ENCODE measurements at regions of chr19 and their contacts with region 1.

Region 1: DNA sequence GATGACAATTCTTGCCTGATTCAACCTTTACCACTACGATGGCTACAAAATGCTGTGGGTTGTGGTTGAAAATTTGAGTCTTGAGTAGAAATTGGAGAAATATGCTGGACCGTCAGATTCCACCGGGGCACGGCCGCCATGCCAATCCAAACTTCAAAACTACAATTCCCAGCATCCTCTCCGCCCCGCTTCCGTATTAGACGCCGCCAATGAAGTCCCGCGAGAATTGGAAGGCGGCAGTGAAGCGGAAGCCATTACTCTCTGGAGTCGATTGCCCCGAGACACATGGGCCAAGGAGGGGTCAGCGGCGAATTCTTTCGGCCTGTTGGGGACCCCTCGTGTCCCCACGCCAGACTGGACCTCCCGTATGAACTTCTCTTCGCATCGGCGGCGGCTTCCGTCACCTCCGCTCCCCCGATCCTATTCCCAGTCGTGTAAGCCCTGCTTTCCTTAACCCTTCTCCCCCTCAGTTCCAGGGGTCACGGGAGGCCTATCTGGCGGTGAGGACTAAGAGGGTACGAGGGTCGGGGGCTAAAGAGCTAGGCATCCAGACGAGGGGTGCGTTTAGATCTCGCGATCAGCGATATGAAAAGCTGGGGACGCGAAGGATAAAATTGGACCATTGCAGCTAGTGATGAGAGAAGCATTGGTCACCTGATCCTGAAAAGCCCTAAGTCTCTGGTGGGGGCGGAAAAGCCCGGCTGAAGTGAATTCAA is at the start of gene ZNF317:
- DNase-seq: peak; percentile 85
- H3K4me3 ChIP-seq: peak within 1 kb of the TSS; percentile 80 to 83 (median 80)
- H3K27ac ChIP-seq: peak within 1 kb of the TSS; percentile 83
- H3K4me1 ChIP-seq: peaks cover 6% of the 10 kb centered on the region
- H3K27me3 ChIP-seq: no peaks in the 10 kb centered on the region
- CTCF ChIP-seq: no peak
- total RNA-seq, gene ZNF317: 26.3 to 36.3 TPM

Region 2: GRCh38 chr19:9107375-9107774 is 32.9 kb before region 1 on chr19 and contains the start of gene OR7G2:
- CTCF ChIA-PET with region 1: no interaction called
- dilution Hi-C with region 1: no loop called
- in situ Hi-C with region 1: no loop called
- intact Hi-C with region 1: no loop called
- DNase-seq: no peak
- H3K4me3 ChIP-seq: no peak within 1 kb of the TSS
- H3K27ac ChIP-seq: no peak within 1 kb of the TSS
- H3K4me1 ChIP-seq: no peaks in the 10 kb centered on the region
- H3K27me3 ChIP-seq: no peaks in the 10 kb centered on the region
- CTCF ChIP-seq: no peak
- total RNA-seq, gene OR7G2: not detected

Region 3: DNA sequence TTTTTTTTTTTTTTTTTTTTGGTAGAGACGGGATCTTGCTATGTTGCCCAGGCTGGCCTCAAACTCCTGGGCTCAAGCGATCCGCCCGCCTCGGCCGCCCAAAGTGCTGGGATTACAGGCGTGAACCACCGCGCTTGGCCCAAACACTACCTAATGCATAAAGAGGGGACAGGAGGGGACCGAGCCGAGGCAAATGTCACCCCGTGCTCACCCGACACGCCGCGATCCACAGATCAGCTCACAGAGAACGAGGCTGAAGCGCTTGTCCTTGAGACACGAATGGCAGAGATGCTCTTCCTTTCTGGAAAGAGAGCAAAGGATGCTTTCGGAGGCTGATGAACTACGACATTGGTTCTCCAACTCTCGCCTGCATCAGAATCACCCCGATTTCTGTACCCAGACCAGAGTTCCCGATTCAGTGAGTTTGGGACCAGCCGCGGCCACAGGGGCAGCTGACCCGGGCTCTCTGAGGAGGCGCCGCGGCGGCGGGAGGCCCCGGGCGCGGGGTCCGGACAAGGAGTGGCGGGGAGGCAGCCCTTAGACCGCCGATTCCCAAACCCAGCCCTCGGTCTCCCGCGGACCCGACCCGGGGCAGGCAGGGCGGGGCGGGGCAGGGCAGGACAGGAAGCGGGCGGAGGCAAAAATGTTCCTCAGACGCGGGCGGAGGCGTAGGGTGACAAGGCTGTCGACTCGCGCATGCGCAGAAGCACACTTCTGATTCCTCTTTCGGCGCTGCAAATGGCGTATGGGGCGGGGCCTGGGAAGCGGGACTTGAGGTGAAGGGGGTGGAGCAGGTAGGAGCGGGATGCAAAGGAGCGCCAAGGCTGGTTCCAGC is 169.0 kb after region 1 on chr19 and contains the start of gene ZNF699:
- CTCF ChIA-PET with region 1: no interaction called
- dilution Hi-C with region 1: no loop called
- in situ Hi-C with region 1: no loop called
- intact Hi-C with region 1: loop called (anchors 2 kb)
- DNase-seq: peak; percentile 96
- H3K4me3 ChIP-seq: peak within 1 kb of the TSS; percentile 77 to 82 (median 80)
- H3K27ac ChIP-seq: peak within 1 kb of the TSS; percentile 86
- H3K4me1 ChIP-seq: peaks cover 4% of the 10 kb centered on the region
- H3K27me3 ChIP-seq: no peaks in the 10 kb centered on the region
- CTCF ChIP-seq: no peak
- total RNA-seq, gene ZNF699: 11.6 to 69.2 TPM

Region 4: GRCh38 chr19:9785367-9786331 is 645.3 kb after region 1 on chr19:
- CTCF ChIA-PET with region 1: no interaction called
- dilution Hi-C with region 1: no loop called
- in situ Hi-C with region 1: loop called in 1 of 2 experiments (anchors 25 kb)
- intact Hi-C with region 1: loop called (anchors 1 kb)
- DNase-seq: peak; percentile 93
- H3K4me3 ChIP-seq: peak overlapping the region; percentile 66 to 74 (median 71)
- H3K27ac ChIP-seq: peak overlapping the region; percentile 73
- H3K4me1 ChIP-seq: no peaks in the 10 kb centered on the region
- H3K27me3 ChIP-seq: no peaks in the 10 kb centered on the region
- CTCF ChIP-seq: no peak

Region 5: GRCh38 chr19:9914315-9915207 is 774.2 kb after region 1 on chr19:
- CTCF ChIA-PET with region 1: no interaction called
- dilution Hi-C with region 1: no loop called
- in situ Hi-C with region 1: no loop called
- intact Hi-C with region 1: loop called (anchors 5 kb)
- DNase-seq: peak; percentile 77
- H3K4me3 ChIP-seq: peak overlapping the region; percentile 45 to 53 (median 46)
- H3K27ac ChIP-seq: no peak overlapping the region
- H3K4me1 ChIP-seq: peaks cover 6% of the 10 kb centered on the region
- H3K27me3 ChIP-seq: peaks cover 8% of the 10 kb centered on the region
- CTCF ChIP-seq: peak; percentile 12 to 62